Heart right ventricle (tissue), 16 donors: ENCODE measurements at regions of chr20 and their contacts with region 1.

Region 1: GRCh38 chr20:9353180-9353915 is 161.0 kb upstream of the LAMP5 start:
- DNase-seq: no peak
- ATAC-seq: peak in 5 of 8 donors; percentile 42 to 73 (median 68)
- H3K4me3 ChIP-seq: no peak overlapping the region
- H3K27ac ChIP-seq: peak overlapping the region in 5 of 10 donors; percentile 10 to 37 (median 28)
- H3K4me1 ChIP-seq: peaks cover 5 to 41% (median 33%) of the 10 kb centered on the region in 9 donors
- H3K27me3 ChIP-seq: no peaks in the 10 kb centered on the region
- CTCF ChIP-seq: peak in 6 of 9 donors; percentile 15 to 44 (median 28)

Region 2: GRCh38 chr20:8790442-8791074 is 562.8 kb before region 1 on chr20:
- intact Hi-C with region 1: loop called in 6 of 10 experiments (anchors 2 to 5 kb)
- DNase-seq: peak in 1 of 2 donors; percentile 19
- ATAC-seq: no peak
- H3K4me3 ChIP-seq: no peak overlapping the region
- H3K27ac ChIP-seq: no peak overlapping the region
- H3K4me1 ChIP-seq: peaks cover 0 to 10% (median 3%) of the 10 kb centered on the region in 9 donors
- H3K27me3 ChIP-seq: no peaks in the 10 kb centered on the region
- CTCF ChIP-seq: peak; percentile 91 to 98 (median 94)

Region 3: GRCh38 chr20:8964959-8965562 is 388.3 kb before region 1 on chr20:
- intact Hi-C with region 1: loop called in 1 of 10 experiments (anchors 5 kb)
- DNase-seq: no peak
- ATAC-seq: peak in 5 of 8 donors; percentile 57 to 74 (median 67)
- H3K4me3 ChIP-seq: no peak overlapping the region
- H3K27ac ChIP-seq: peak overlapping the region in 3 of 10 donors; percentile 2 to 38 (median 25)
- H3K4me1 ChIP-seq: peaks cover 0 to 36% (median 16%) of the 10 kb centered on the region in 9 donors
- H3K27me3 ChIP-seq: no peaks in the 10 kb centered on the region
- CTCF ChIP-seq: no peak

Region 4: DNA sequence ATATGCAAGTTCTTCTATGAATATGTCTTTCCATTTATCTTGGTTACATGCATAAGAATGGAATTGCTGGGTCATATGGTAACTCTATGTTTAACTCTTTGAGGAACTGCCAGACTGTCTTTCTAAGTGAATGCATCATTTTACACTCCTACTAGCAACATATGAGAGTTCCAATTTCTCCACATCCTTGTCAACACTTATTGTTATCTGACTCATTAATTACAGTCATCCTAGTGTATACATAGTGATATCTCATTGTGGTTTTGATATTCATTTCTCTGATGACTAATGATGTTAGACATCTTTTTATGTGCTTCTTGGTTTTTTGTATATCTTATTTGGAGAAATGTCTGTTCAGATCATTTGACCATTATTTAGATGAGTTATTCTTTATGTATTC is 64.3 kb after region 1 on chr20:
- intact Hi-C with region 1: no loop called
- DNase-seq: no peak
- ATAC-seq: no peak
- H3K4me3 ChIP-seq: no peak overlapping the region
- H3K27ac ChIP-seq: no peak overlapping the region
- H3K4me1 ChIP-seq: no peaks in the 10 kb centered on the region
- H3K27me3 ChIP-seq: no peaks in the 10 kb centered on the region
- CTCF ChIP-seq: no peak